GM12878 (cell line): ENCODE measurements at regions of chr16 and their contacts with region 1.

Region 1: DNA sequence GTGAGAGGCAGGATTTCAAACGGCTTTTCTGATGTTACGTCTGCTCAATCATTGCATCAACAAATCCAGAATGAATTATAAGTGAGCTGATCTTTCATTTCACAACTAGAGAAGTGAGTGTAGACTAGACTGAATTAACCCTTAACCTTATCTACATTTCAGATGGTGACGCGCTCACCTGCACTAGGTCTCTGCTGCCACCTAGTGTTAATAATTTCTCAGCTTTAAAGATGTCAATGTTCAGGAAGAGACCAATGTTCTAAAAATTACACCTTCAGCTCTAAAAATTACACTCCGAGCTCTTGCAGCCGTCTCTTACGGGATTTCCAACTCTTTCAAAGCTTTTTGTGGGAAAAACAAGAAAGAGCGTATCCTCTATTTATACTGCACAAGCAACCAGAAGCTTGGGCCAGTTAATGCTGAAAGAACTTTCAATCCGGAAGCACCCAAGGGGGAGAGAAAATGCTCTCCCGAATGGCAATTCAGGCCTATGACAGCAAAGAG is 88.2 kb upstream of the FA2H start:
- DNase-seq: peak; percentile 45
- ATAC-seq: peak; percentile 97
- H3K4me3 ChIP-seq: no peak overlapping the region
- H3K27ac ChIP-seq: no peak overlapping the region
- H3K4me1 ChIP-seq: no peaks in the 10 kb centered on the region
- H3K27me3 ChIP-seq: no peaks in the 10 kb centered on the region
- CTCF ChIP-seq: peak; percentile 64 to 91 (median 73)
- EP300 ChIP-seq: no peak
- POLR2A ChIP-seq: no peak
- RAD21 ChIP-seq: peak; percentile 93

Region 2: DNA sequence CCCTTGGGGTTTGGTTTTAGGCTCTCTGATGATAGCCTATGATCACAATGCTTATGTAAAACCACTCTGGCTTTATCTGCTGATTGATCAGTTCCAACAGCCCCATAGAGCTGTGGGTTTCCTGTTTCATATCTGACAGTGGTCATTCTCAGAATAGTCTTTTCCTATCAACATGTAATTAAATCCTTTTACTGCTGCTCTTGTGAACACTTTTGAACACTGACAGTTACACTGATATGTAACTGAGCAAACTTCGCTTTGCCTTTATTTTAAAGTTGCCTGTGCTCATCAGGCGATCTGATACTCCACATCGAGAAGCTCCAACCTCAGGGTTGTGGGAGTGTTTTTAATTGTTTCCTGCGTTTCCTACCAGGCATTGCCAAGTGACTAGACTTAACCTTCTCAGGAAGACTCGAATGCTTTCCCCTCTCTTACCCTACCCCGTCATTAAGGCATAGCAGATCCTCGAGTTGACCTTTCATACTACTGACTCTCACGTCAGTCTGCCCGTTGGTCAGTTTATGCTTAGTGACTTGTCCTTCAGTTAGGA is 424.2 kb before region 1 on chr16:
- CTCF ChIA-PET with region 1: no interaction called
- POLR2A ChIA-PET with region 1: no interaction called
- RAD21 ChIA-PET with region 1: no interaction called
- SMC1A ChIA-PET with region 1: no interaction called
- in situ Hi-C with region 1: no loop called
- intact Hi-C with region 1: no loop called
- DNase-seq: no peak
- ATAC-seq: no peak
- H3K4me3 ChIP-seq: no peak overlapping the region
- H3K27ac ChIP-seq: no peak overlapping the region
- H3K4me1 ChIP-seq: no peaks in the 10 kb centered on the region
- H3K27me3 ChIP-seq: no peaks in the 10 kb centered on the region
- CTCF ChIP-seq: no peak
- EP300 ChIP-seq: no peak
- POLR2A ChIP-seq: no peak
- RAD21 ChIP-seq: no peak

Region 3: DNA sequence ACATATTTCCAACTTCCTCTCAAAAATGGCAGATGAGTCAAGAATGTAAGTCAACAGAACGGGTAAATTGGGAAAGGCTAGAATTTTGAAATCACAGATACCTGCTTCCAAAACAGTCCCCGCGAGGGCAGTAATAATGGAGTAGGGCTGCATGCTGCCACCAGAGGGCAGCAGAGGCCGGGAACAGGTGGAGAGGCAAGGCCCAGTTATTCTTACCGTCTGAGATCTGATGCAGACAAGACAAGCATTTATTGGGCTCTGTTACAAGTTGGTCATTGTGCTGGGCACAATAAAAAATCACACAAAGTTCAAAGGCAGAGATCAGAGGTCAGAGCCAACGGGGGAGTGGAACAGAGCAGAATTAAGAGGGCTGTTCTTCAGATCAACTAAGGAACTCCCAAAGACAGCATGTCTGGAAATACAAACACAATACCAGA is 153.3 kb before region 1 on chr16:
- CTCF ChIA-PET with region 1: interaction called, 190 read pairs
- POLR2A ChIA-PET with region 1: no interaction called
- RAD21 ChIA-PET with region 1: interaction called, 62 read pairs
- SMC1A ChIA-PET with region 1: interaction called, 59 read pairs
- in situ Hi-C with region 1: no loop called
- intact Hi-C with region 1: loop called (anchors 1 kb)
- DNase-seq: no peak
- ATAC-seq: peak; percentile 99
- H3K4me3 ChIP-seq: no peak overlapping the region
- H3K27ac ChIP-seq: no peak overlapping the region
- H3K4me1 ChIP-seq: no peaks in the 10 kb centered on the region
- H3K27me3 ChIP-seq: no peaks in the 10 kb centered on the region
- CTCF ChIP-seq: peak; percentile 95 to 99 (median 97)
- EP300 ChIP-seq: no peak
- POLR2A ChIP-seq: no peak
- RAD21 ChIP-seq: peak; percentile 94

Region 4: DNA sequence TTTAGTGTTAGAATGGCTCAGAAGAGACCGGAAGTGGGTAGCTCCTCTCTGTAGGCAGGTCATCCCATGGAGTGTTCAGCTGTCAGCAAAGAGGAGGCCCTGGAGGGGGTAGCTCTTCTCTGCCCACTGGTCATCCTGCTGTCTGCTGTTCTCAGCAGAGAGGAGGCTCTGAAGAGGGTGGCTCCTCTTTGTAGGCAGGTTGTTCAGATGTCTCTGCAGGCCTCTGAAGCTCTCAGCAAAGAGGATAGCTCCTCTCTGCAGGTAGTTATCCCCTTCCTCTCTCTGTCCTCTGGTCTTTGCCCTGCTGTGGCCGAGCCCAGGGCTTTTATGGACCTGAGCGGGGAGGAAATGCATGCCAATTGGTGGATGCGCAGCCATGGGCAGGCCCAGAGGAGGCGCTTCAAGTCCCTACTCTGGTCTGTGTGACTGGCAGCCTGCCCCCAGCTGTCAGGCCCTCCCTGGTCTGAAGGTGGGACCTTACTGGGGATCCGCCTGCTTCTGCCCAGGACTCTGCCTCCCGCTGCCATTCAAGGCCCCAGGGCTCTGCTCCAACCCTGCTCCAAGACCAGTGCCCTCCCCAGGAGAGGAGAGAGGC is 55.6 kb before region 1 on chr16:
- CTCF ChIA-PET with region 1: interaction called, 116 read pairs
- POLR2A ChIA-PET with region 1: no interaction called
- RAD21 ChIA-PET with region 1: interaction called, 81 read pairs
- SMC1A ChIA-PET with region 1: interaction called, 77 read pairs
- in situ Hi-C with region 1: no loop called
- intact Hi-C with region 1: no loop called
- DNase-seq: no peak
- ATAC-seq: no peak
- H3K4me3 ChIP-seq: no peak overlapping the region
- H3K27ac ChIP-seq: no peak overlapping the region
- H3K4me1 ChIP-seq: no peaks in the 10 kb centered on the region
- H3K27me3 ChIP-seq: no peaks in the 10 kb centered on the region
- CTCF ChIP-seq: no peak
- EP300 ChIP-seq: no peak
- POLR2A ChIP-seq: no peak
- RAD21 ChIP-seq: no peak

Region 5: DNA sequence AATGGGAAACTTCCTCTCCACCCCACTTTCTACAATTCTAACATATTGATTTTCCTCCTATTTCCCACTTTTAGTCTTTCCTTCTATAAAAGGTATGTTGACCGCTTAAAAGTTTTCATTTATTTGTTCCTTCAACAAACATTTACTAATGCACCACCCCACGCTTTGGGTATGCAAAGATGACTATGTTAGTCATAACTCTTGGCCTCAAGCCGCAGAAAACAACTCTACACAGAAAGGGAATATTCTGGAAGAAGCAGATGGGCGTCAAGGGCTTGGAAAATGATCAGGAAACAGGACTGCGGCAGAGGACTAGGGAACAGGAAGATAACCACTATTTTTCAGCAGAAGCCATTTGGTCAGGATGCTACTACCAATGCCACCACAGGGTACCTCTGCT is 31.3 kb before region 1 on chr16:
- CTCF ChIA-PET with region 1: interaction called, 10 read pairs
- POLR2A ChIA-PET with region 1: no interaction called
- RAD21 ChIA-PET with region 1: interaction called, 5 read pairs
- SMC1A ChIA-PET with region 1: interaction called, 5 read pairs
- in situ Hi-C with region 1: no loop called
- intact Hi-C with region 1: no loop called
- DNase-seq: no peak
- ATAC-seq: no peak
- H3K4me3 ChIP-seq: no peak overlapping the region
- H3K27ac ChIP-seq: no peak overlapping the region
- H3K4me1 ChIP-seq: no peaks in the 10 kb centered on the region
- H3K27me3 ChIP-seq: no peaks in the 10 kb centered on the region
- CTCF ChIP-seq: no peak
- EP300 ChIP-seq: no peak
- POLR2A ChIP-seq: no peak
- RAD21 ChIP-seq: no peak

Region 6: GRCh38 chr16:74874912-74875546 is 12.2 kb after region 1 on chr16:
- CTCF ChIA-PET with region 1: interaction called, 40 read pairs
- POLR2A ChIA-PET with region 1: no interaction called
- RAD21 ChIA-PET with region 1: interaction called, 5 read pairs
- SMC1A ChIA-PET with region 1: interaction called, 3 read pairs
- in situ Hi-C with region 1: no loop called
- intact Hi-C with region 1: no loop called
- DNase-seq: no peak
- ATAC-seq: no peak
- H3K4me3 ChIP-seq: no peak overlapping the region
- H3K27ac ChIP-seq: no peak overlapping the region
- H3K4me1 ChIP-seq: no peaks in the 10 kb centered on the region
- H3K27me3 ChIP-seq: no peaks in the 10 kb centered on the region
- CTCF ChIP-seq: no peak
- EP300 ChIP-seq: no peak
- POLR2A ChIP-seq: no peak
- RAD21 ChIP-seq: no peak

Region 7: GRCh38 chr16:74998481-74999218 is 135.9 kb after region 1 on chr16 and contains the start of gene ZNRF1:
- CTCF ChIA-PET with region 1: interaction called, 4 read pairs
- POLR2A ChIA-PET with region 1: no interaction called
- RAD21 ChIA-PET with region 1: interaction called, 5 read pairs
- SMC1A ChIA-PET with region 1: interaction called, 4 read pairs
- in situ Hi-C with region 1: no loop called
- intact Hi-C with region 1: loop called (anchors 10 kb)
- DNase-seq: peak; percentile 73
- ATAC-seq: peak; percentile 82
- H3K4me3 ChIP-seq: peak within 1 kb of the TSS; percentile 72
- H3K27ac ChIP-seq: no peak within 1 kb of the TSS
- H3K4me1 ChIP-seq: peaks cover 8% of the 10 kb centered on the region
- H3K27me3 ChIP-seq: no peaks in the 10 kb centered on the region
- CTCF ChIP-seq: peak; percentile 60 to 72 (median 62); a peak in 5 of 6 replicates
- EP300 ChIP-seq: peak; percentile 33 to 81; a peak in 3 of 4 replicates
- POLR2A ChIP-seq: peak; percentile 58
- RAD21 ChIP-seq: peak; percentile 86
- polyA plus RNA-seq, gene ZNRF1: 12.0 to 14.2 TPM

Region 8: DNA sequence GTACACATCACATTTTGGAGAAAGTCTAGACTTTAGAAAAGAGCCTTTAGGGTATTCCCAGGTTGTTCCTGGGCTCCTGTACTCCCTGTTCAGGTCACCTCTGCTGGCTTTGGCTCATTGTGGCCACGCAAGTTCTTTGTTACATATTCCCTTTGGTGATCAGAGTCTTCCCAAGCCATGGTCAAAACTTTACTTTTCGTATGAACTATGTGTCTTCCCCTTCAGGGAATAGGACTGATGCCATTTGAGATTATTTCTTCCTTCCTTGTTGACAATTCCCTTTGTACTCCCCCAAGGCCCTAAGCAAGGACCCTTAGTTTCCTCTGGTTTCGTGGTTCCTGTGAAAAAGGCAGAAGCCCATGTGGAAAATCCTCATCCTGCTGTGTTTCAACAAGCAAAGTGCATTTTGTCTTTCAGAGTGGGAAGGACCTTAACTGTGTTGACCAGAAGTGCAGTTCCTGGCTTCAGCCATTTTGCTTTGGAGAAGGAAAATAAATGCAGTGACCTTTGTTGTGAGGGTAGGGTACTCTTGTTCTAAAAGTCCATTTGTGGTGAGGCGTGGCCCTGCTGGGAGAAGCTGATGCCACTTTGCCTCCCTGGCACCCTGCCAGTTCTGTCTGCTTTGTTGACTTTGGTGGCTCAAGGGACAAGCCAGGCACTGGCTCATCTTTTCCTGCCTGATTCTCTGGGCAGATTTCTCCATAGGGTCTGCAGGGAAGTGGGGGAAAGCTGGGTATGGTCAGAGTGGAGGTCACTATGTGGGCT is 191.2 kb after region 1 on chr16:
- CTCF ChIA-PET with region 1: no interaction called
- POLR2A ChIA-PET with region 1: no interaction called
- RAD21 ChIA-PET with region 1: no interaction called
- SMC1A ChIA-PET with region 1: no interaction called
- in situ Hi-C with region 1: no loop called
- intact Hi-C with region 1: no loop called
- DNase-seq: no peak
- ATAC-seq: no peak
- H3K4me3 ChIP-seq: no peak overlapping the region
- H3K27ac ChIP-seq: no peak overlapping the region
- H3K4me1 ChIP-seq: 0 out of 2 replicates have a peak, but pooled peaks cover 8% of the 10 kb centered on the region
- H3K27me3 ChIP-seq: no peaks in the 10 kb centered on the region
- CTCF ChIP-seq: no peak
- EP300 ChIP-seq: no peak
- POLR2A ChIP-seq: no peak
- RAD21 ChIP-seq: no peak